ENCODE measurements at regions of chr11 and their contacts with region 1.

Region 1: DNA sequence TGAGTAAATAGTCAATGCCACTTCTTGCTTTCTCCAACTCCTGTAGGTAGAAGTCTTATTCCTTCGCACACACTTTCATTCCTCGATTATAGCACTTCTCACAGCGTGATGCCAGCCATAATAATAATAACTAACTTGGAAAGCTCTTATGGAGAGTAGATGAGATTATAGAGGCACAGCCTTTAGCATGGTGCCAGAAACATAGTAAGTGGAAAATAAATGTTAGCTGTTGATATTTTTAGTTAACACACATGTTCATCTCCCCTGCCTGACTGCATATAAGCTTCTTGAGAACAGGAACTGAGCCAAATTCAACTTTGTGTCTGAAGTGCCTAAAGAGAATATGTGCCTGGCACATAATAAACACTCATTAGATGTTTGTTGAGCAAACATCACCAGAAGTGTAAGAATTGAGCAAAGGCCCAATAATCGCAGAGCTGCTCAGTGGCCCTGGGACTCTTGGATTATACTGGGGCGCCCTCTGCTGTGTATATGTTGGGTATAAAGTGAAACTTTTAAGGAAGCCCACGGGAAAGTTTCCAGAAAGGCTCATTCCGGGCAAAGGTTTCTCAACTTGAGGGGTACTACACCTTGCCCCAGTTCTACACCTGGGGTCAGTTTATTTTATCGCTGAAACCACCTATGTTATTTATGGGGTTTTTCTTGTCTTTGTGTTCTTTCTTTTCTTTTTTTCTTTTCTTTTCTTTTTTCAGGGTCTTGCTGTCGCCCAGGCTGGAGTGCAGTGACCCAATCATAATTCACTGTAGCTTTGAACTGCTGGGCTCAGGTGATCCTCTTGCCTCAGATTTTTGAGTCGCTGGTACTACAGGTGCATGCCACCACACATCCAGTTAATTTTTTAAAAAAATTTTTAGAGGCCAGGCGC is 22.3 kb downstream of the SLN start:
- DNase-seq: no peak
- H3K4me3 ChIP-seq: no peak overlapping the region
- CTCF ChIP-seq: peak; percentile 61

Region 2: GRCh38 chr11:107549253-107549953 is 140.2 kb before region 1 on chr11:
- CTCF ChIA-PET with region 1: interaction called, 109 read pairs
- POLR2A ChIA-PET with region 1: no interaction called
- DNase-seq: no peak
- H3K4me3 ChIP-seq: no peak overlapping the region
- CTCF ChIP-seq: peak; percentile 70

Region 3: GRCh38 chr11:107565219-107565937 is 124.2 kb before region 1 on chr11 and contains the start of gene ALKBH8:
- CTCF ChIA-PET with region 1: interaction called, 485 read pairs
- POLR2A ChIA-PET with region 1: interaction called, 3 read pairs
- DNase-seq: no peak
- H3K4me3 ChIP-seq: peak within 1 kb of the TSS; percentile 72
- CTCF ChIP-seq: no peak

Region 4: GRCh38 chr11:107669191-107669740 is 20.3 kb before region 1 on chr11:
- CTCF ChIA-PET with region 1: interaction called, 19 read pairs
- POLR2A ChIA-PET with region 1: no interaction called
- DNase-seq: no peak
- H3K4me3 ChIP-seq: no peak overlapping the region
- CTCF ChIP-seq: no peak

Region 5: GRCh38 chr11:107676336-107677057 is 13.1 kb before region 1 on chr11:
- CTCF ChIA-PET with region 1: interaction called, 19 read pairs
- POLR2A ChIA-PET with region 1: no interaction called
- DNase-seq: no peak
- H3K4me3 ChIP-seq: no peak overlapping the region
- CTCF ChIP-seq: no peak

Measured in AG04449 (cell line).